Transverse colon (tissue), 4 donors: ENCODE measurements at regions of chr19 and their contacts with region 1.

Region 1: GRCh38 chr19:18408053-18408476 is 10.6 kb upstream of the LRRC25 start:
- DNase-seq: peak; percentile 72
- H3K4me3 ChIP-seq: no peak overlapping the region
- H3K27ac ChIP-seq: peak overlapping the region in 2 of 4 donors; percentile 26 to 41
- H3K4me1 ChIP-seq: peaks cover 0 to 18% (median 14%) of the 10 kb centered on the region in 4 donors
- H3K27me3 ChIP-seq: no peaks in the 10 kb centered on the region
- CTCF ChIP-seq: peak; percentile 33 to 66 (median 62)
- EP300 ChIP-seq: no peak
- POLR2A ChIP-seq: no peak

Region 2: DNA sequence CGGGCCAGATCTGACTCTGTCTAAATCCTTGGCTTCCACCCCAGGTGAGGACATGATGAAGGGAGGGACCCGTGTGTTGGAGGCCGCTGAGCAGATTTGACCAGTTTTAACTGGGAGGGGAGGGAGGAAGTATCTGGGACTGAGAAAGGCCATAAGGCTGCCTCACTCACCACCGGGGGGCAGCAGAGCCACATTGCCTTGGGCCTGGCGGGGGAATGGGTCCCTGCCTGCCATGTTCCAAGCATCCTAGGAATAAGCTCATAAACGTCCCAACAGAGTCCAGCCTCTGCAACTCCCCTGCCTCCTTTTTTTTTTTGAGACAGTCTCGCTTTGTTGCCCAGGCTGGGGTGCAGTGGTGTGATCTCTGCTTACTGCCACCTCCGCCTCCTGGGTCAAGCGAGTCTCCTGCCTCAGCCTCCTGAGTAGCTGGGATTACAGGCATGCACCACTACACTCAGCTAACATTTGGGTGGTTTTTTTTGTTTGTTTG is 295.0 kb before region 1 on chr19:
- in situ Hi-C with region 1: no loop called
- intact Hi-C with region 1: no loop called
- DNase-seq: peak; percentile 91
- H3K4me3 ChIP-seq: no peak overlapping the region
- H3K27ac ChIP-seq: peak overlapping the region in 3 of 4 donors; percentile 15 to 39 (median 38)
- H3K4me1 ChIP-seq: peaks cover 16 to 45% (median 29%) of the 10 kb centered on the region in 4 donors
- H3K27me3 ChIP-seq: no peaks in the 10 kb centered on the region
- CTCF ChIP-seq: peak; percentile 78 to 91 (median 86)
- EP300 ChIP-seq: no peak
- POLR2A ChIP-seq: no peak

Region 3: DNA sequence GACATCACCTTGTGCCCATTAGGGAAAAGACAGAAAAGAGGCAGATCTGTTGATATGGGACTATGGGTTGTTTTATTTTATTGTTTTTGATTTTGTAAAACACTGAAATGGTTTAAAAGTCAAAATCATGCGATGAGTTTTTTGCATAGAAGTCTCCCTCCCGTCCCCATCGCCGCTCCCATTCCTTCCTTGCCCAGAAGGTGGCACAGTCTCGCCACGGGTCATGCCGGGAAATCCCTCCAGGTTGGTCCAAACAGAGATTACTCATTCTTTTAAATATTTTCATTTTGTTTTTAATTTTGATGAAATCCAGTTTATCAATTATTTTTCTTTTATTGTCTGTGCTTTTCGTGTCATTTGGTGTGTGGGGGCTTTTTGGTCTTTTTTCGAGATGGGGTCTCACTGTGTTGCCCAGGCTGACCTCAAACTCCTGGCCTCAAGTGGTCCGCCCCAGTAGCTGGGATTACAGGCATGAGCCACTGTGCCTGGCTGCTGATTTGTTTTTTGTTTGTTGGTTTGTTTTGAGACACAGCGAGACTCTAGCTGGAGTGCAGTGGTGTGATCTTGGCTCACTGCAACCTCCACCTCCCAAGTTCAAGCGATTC is 58.4 kb before region 1 on chr19:
- in situ Hi-C with region 1: loop called in 3 of 4 experiments (anchors 5 to 10 kb)
- intact Hi-C with region 1: no loop called
- DNase-seq: peak; percentile 63
- H3K4me3 ChIP-seq: no peak overlapping the region
- H3K27ac ChIP-seq: no peak overlapping the region
- H3K4me1 ChIP-seq: peaks cover 0 to 18% (median 9%) of the 10 kb centered on the region in 4 donors
- H3K27me3 ChIP-seq: no peaks in the 10 kb centered on the region
- CTCF ChIP-seq: peak; percentile 58 to 85 (median 77)
- EP300 ChIP-seq: no peak
- POLR2A ChIP-seq: no peak